ENCODE measurements at regions of chr16 and their contacts with region 1.

Region 1: GRCh38 chr16:68843482-68844210 is at the start of gene TANGO6:
- DNase-seq: peak; percentile 74 to 85
- ATAC-seq: peak; percentile 95 to 96
- H3K4me3 ChIP-seq: peak within 1 kb of the TSS; percentile 75
- H3K27ac ChIP-seq: peak within 1 kb of the TSS; percentile 93 to 99
- H3K4me1 ChIP-seq: 0 out of 3 replicates have a peak, but pooled peaks cover 5% of the 10 kb centered on the region
- CTCF ChIP-seq: peak; percentile 47
- EP300 ChIP-seq: no peak
- POLR2A ChIP-seq: peak; percentile 94
- RAD21 ChIP-seq: peak in 1 of 2 experiments; percentile 23; a peak in 4 of 5 replicates
- polyA plus RNA-seq, gene TANGO6: 19.5 and 30.2 TPM in 2 replicates

Region 2: GRCh38 chr16:68704232-68704867 is 139.3 kb before region 1 on chr16:
- CTCF ChIA-PET with region 1: interaction called, 11 read pairs
- POLR2A ChIA-PET with region 1: interaction called, 4 read pairs
- DNase-seq: peak; percentile 82 to 89
- ATAC-seq: peak; percentile 84 to 86
- H3K4me3 ChIP-seq: no peak overlapping the region
- H3K27ac ChIP-seq: peak overlapping the region in 1 of 2 experiments; percentile 46; a peak in 3 of 6 replicates
- H3K4me1 ChIP-seq: peaks cover 20% of the 10 kb centered on the region
- CTCF ChIP-seq: peak; percentile 90
- EP300 ChIP-seq: no peak
- POLR2A ChIP-seq: no peak
- RAD21 ChIP-seq: peak; percentile 97

Region 3: GRCh38 chr16:68776821-68777351 is 66.8 kb before region 1 on chr16:
- CTCF ChIA-PET with region 1: no interaction called
- POLR2A ChIA-PET with region 1: no interaction called
- DNase-seq: no peak
- ATAC-seq: no peak
- H3K4me3 ChIP-seq: no peak overlapping the region
- H3K27ac ChIP-seq: no peak overlapping the region
- H3K4me1 ChIP-seq: 0 out of 3 replicates have a peak, but pooled peaks cover 9% of the 10 kb centered on the region
- CTCF ChIP-seq: no peak
- EP300 ChIP-seq: no peak
- POLR2A ChIP-seq: no peak
- RAD21 ChIP-seq: no peak

Region 4: GRCh38 chr16:68860978-68861892 is 17.6 kb after region 1 on chr16:
- CTCF ChIA-PET with region 1: interaction called, 10 read pairs
- POLR2A ChIA-PET with region 1: no interaction called
- DNase-seq: no peak
- ATAC-seq: no peak
- H3K4me3 ChIP-seq: no peak overlapping the region
- H3K27ac ChIP-seq: no peak overlapping the region
- H3K4me1 ChIP-seq: no peaks in the 10 kb centered on the region
- CTCF ChIP-seq: no peak
- EP300 ChIP-seq: no peak
- POLR2A ChIP-seq: no peak
- RAD21 ChIP-seq: no peak

Measured in A549 (cell line).